ENCODE measurements at regions of chr15 and their contacts with region 1.

Region 1: DNA sequence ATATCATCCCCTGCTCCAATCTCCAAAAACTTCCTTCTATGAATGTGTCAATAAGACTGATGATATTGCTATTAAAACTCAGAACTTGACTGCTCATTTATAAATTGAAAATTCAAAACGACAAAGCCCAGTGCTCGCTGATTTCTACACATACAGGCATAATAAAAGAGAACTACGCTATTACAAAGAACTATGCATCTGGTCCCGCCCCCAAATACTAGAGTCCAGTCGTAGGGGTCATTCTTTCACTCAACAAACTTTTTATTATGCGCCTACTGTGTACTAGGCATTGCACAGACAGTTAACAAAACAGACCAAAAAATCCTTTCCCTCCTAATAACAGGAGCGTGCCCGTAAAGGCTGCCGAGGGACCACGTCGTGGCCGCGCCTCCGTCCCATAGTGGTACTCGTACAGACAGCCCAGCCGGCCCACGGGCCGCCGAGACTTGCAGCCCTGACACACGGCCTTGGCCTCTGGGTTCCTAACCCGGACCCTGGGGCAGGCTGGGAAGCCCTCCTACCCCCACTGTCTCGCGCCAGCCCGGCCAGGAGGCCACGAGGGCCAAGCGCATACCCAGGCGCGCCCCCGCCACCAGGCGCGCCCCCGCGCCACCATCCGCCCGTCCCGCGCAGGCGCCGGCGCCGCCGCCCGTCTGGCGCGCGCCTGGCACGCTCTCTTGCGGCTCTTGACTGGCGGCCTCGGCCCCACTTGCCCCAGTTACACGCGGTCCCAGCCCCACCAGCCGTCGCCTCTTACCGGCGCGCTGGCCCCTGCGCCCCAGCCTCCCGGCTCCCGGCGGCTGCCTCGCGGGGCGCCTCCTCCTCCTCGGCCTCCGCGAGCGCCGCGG is 757 bp downstream of the AVEN start:
- DNase-seq: peak; percentile 71
- ATAC-seq: peak; percentile 79
- H3K4me3 Mint-ChIP-seq: peak overlapping the region; percentile 92
- H3K27ac Mint-ChIP-seq: peak overlapping the region; percentile 89
- H3K4me1 Mint-ChIP-seq: peaks cover 18% of the 10 kb centered on the region
- H3K27me3 Mint-ChIP-seq: no peaks in the 10 kb centered on the region
- CTCF ChIP-seq: no peak

Region 2: DNA sequence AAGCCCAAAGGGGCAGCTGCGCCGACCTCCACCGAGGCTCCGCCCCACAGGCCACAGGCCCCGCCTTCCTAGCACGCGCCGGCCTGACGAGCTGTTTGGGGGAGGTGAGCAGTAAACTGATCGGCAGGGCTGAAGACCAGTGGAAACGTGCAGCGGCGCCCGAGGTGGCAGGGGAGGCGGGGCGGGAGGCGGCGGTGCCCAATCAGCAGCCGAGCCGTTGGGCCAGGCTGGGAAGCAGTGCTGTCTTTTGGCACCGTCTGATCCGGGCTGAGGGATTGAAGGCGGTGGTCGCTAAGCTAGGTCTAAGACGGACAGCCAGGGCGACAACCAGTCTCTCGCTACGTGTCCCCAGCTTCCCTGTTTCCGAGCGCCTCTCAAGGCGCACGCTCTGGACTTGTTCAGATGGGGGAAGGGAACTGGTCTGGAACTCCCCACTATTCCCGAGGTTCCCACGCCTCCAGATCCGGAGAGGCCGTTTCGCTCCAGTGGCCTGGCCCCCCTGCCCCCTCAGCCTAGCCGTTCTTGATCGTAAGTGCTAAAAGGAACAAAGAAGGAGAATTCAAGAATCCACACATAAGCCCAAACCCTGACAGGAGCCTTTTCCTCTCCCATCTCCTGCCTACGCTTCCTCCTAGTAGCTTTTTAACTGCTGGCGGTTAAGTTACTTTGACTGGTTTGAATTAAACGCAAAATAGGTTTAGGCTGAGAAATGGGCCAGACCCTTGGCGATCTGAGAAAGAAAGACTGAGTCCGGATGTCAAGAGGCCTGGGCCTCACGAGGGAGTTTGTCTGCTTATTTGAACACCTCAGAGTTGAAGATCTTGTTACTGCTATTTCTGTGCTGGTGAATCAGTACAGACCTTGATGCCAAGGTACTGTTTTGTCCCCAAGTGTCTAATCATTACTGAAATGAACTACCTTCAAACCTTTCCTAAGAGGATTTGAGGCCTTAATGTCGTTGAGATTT is 843.3 kb before region 1 on chr15 and contains the start of gene FMN1:
- CTCF ChIA-PET with region 1: no interaction called
- POLR2A ChIA-PET with region 1: no interaction called
- intact Hi-C with region 1: loop called (anchors 10 kb)
- DNase-seq: peak; percentile 72
- ATAC-seq: peak; percentile 100
- H3K4me3 Mint-ChIP-seq: peak within 1 kb of the TSS; percentile 81
- H3K27ac Mint-ChIP-seq: peak within 1 kb of the TSS; percentile 59
- H3K4me1 Mint-ChIP-seq: peaks cover 18% of the 10 kb centered on the region
- H3K27me3 Mint-ChIP-seq: peaks cover 19% of the 10 kb centered on the region
- CTCF ChIP-seq: no peak
- total RNA-seq, gene FMN1: 0.69 and 0.80 TPM in 2 replicates

Region 3: GRCh38 chr15:33915571-33916407 is 122.5 kb before region 1 on chr15:
- CTCF ChIA-PET with region 1: no interaction called
- POLR2A ChIA-PET with region 1: no interaction called
- intact Hi-C with region 1: no loop called
- DNase-seq: no peak
- ATAC-seq: no peak
- H3K4me3 Mint-ChIP-seq: no peak overlapping the region
- H3K27ac Mint-ChIP-seq: no peak overlapping the region
- H3K4me1 Mint-ChIP-seq: peaks cover 13% of the 10 kb centered on the region
- H3K27me3 Mint-ChIP-seq: no peaks in the 10 kb centered on the region
- CTCF ChIP-seq: no peak

Region 4: GRCh38 chr15:34209421-34210282 is 171.4 kb after region 1 on chr15 and contains the start of gene KATNBL1:
- CTCF ChIA-PET with region 1: interaction called, 5 read pairs
- POLR2A ChIA-PET with region 1: interaction called, 3 read pairs
- intact Hi-C with region 1: loop called (anchors 1 kb)
- DNase-seq: peak; percentile 97
- ATAC-seq: peak; percentile 93
- H3K4me3 Mint-ChIP-seq: peak within 1 kb of the TSS; percentile 89
- H3K27ac Mint-ChIP-seq: peak within 1 kb of the TSS; percentile 82
- H3K4me1 Mint-ChIP-seq: peaks cover 15% of the 10 kb centered on the region
- H3K27me3 Mint-ChIP-seq: no peaks in the 10 kb centered on the region
- CTCF ChIP-seq: no peak
- total RNA-seq, gene KATNBL1: 46.2 and 53.3 TPM in 2 replicates

Region 5: GRCh38 chr15:34342737-34343575 is 304.7 kb after region 1 on chr15 and contains the starts of genes NOP10 and NUTM1:
- CTCF ChIA-PET with region 1: no interaction called
- POLR2A ChIA-PET with region 1: no interaction called
- intact Hi-C with region 1: loop called (anchors 2 kb)
- DNase-seq: peak; percentile 89
- ATAC-seq: peak; percentile 90
- H3K4me3 Mint-ChIP-seq: no peak within 1 kb of the TSS
- H3K27ac Mint-ChIP-seq: peak within 1 kb of the TSS; percentile 74
- H3K4me1 Mint-ChIP-seq: peaks cover 25% of the 10 kb centered on the region
- H3K27me3 Mint-ChIP-seq: no peaks in the 10 kb centered on the region
- CTCF ChIP-seq: peak; percentile 57
- total RNA-seq, gene NOP10: 116 and 130 TPM in 2 replicates
- total RNA-seq, gene NUTM1: not detected in 2 replicates

Region 6: GRCh38 chr15:35545824-35546510 is 1507.7 kb after region 1 on chr15 and contains the start of gene DPH6:
- CTCF ChIA-PET with region 1: no interaction called
- POLR2A ChIA-PET with region 1: no interaction called
- intact Hi-C with region 1: loop called (anchors 5 kb)
- DNase-seq: peak; percentile 84
- ATAC-seq: peak; percentile 82
- H3K4me3 Mint-ChIP-seq: peak within 1 kb of the TSS; percentile 93
- H3K27ac Mint-ChIP-seq: peak within 1 kb of the TSS; percentile 92
- H3K4me1 Mint-ChIP-seq: peaks cover 30% of the 10 kb centered on the region
- H3K27me3 Mint-ChIP-seq: no peaks in the 10 kb centered on the region
- CTCF ChIP-seq: no peak
- total RNA-seq, gene DPH6: 18.8 and 20.8 TPM in 2 replicates

Measured in activated B cell treated with CpG ODN at 0.5 μM for 24 hours (primary cell).